ENCODE measurements at regions of chr2 and their contacts with region 1.

Region 1: DNA sequence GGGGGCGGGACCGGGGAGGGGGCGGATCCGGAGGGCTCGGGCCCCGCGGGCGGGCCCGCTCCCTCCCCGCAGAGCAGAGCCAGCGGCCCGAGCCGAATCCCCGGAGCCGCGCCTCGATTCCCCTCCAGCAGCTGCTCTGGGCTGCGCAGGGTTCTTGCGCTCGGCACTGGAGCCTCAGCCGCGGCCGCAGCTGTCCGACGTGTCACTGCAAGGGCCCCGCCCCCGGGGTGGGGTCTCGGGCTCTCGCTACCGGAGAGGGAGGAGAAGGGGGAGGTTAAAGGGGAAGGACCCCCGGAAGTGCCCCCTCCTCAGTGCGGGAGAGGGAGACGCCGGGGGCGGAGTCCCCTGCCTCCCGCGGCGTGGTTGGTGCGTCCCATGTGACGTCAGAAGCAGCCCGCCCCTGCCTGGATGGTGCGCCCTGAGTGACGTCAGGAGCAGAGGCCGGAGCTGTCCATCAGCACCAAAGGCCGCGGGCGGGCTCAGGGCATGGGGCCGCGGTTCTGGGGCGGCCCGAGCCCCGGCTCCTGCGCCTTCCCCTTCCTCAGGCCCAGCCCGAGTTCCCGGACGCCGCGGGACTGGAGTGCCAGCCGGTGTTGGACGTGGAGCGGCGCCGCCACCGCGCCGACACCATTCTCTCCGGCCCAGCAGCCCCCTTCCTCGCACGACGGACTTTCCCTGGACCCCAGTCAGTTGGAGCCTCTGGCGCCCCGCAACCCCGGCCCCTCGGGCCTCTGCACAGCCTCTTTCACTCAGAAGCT is at the starts of genes CHPF and TMEM198:
- DNase-seq: peak; percentile 93
- H3K4me3 ChIP-seq: peak within 1 kb of the TSS; percentile 77
- CTCF ChIP-seq: no peak

Region 2: GRCh38 chr2:219645631-219646527 is 102.1 kb after region 1 on chr2:
- in situ Hi-C with region 1: loop called (anchors 5 kb)
- DNase-seq: peak; percentile 71
- H3K4me3 ChIP-seq: no peak overlapping the region
- CTCF ChIP-seq: no peak